ENCODE measurements at regions of chr2 and their contacts with region 1.

Region 1: DNA sequence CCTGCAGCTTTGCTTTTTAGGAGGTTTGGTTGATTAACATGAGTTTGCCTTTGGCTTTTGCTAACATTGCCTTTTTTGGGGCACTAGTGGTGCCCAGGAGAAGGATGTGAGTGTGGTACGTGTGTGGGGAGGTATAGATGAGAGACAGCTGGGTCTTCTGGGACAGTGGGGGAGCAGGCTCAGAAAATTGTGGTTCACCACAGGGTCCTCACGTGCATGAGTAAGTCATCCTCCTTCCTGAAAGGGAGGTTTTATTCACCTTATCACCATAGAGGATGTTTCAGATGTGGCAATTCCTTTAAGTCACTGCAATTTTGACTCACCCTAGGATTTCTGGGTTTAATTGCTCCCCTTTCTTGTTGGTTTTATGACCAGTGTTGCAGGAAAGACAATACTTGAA is 128.9 kb downstream of the LYPD6B start:
- DNase-seq: peak; percentile 77
- H3K4me3 Mint-ChIP-seq: no peak overlapping the region
- H3K27ac Mint-ChIP-seq: no peak overlapping the region
- H3K4me1 Mint-ChIP-seq: peaks cover 22% of the 10 kb centered on the region
- H3K27me3 Mint-ChIP-seq: peaks cover 31% of the 10 kb centered on the region

Region 2: DNA sequence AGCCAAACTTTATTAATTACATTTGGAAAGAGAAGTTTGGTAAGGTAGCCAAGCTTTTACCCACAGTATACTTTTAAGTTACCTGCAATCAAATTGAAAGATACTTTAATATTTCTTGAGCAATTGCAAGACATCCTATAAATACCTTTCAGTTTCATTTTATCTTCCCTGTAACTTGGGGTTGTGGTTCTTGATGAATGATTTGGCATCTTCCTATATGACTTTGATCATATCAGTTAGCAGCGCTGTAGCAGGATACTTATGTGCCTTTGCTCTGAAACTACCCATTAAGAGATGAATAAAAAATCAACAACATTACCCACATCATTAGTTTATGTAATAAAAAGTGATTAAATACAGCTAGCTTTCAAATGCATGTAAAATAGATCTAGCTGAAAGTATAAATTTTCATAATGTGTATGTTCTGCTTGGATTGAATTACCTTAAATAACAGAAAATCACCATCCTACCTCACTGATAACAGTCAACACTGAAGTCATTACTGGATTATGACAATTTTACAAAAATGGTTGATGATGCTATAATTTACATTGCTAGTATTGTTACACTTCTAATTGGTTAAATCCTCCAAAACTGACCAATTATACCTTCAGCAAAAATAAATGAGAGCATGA is 369.8 kb after region 1 on chr2:
- CTCF ChIA-PET with region 1: no interaction called
- intact Hi-C with region 1: loop called (anchors 1 kb)
- DNase-seq: no peak
- H3K4me3 Mint-ChIP-seq: no peak overlapping the region
- H3K27ac Mint-ChIP-seq: no peak overlapping the region
- H3K4me1 Mint-ChIP-seq: peaks cover 7% of the 10 kb centered on the region
- H3K27me3 Mint-ChIP-seq: no peaks in the 10 kb centered on the region

Measured in activated naive CD4-positive, alpha-beta T cell treated with anti-CD3 and anti-CD28 coated beads for 36 hours (primary cell).